Esophagus muscularis mucosa (tissue), 4 donors: ENCODE measurements at regions of chr12 and their contacts with region 1.

Region 1: DNA sequence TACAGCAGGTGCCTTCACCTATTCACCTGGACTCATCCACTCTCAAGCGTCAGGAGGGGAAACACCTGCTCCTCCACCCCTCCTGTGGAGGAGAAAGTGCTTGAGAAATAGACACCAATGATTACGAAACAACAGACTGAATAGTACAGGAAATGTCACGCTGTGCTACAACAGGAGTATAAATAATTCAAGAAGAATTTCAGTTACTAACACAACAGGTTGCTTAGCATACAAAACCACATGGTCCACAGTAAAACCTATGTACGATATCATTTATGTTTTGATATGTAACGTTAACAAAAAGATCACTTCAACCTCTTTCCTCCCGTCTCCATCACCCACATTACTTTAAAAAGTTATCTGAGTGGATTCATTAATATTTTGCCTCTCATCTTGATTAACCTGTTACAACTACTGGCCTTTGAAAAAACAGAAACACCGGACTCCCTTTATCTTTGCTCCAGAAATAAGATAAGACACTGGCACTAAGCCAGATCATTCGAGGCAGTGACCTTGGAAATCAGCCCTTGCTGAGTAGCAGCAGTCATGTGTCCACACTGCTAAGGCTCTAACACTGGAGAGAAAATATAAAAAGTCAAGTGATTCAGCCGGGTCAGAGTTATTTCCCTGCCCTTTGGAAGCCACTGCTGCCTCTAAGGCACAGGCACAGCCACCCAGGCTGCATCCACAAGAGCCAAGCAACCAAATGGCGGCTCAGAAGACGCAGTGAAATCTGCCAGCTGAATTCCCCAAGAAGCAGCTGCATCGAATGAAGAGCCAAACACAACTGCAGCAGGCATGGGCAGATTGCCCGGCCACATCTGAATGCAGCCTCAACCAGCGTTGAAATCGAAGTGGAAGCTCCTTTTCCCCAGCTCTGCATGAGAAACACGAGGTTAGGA is 40.9 kb downstream of the NT5DC3 start:
- DNase-seq: no peak
- H3K4me3 ChIP-seq: peak overlapping the region in 3 of 4 donors; percentile 7 to 29 (median 26)
- H3K27ac ChIP-seq: peak overlapping the region; percentile 70 to 84 (median 76)
- H3K4me1 ChIP-seq: peaks cover 18 to 84% (median 73%) of the 10 kb centered on the region in 4 donors
- H3K27me3 ChIP-seq: no peaks in the 10 kb centered on the region
- CTCF ChIP-seq: no peak
- EP300 ChIP-seq: no peak
- POLR2A ChIP-seq: no peak

Region 2: DNA sequence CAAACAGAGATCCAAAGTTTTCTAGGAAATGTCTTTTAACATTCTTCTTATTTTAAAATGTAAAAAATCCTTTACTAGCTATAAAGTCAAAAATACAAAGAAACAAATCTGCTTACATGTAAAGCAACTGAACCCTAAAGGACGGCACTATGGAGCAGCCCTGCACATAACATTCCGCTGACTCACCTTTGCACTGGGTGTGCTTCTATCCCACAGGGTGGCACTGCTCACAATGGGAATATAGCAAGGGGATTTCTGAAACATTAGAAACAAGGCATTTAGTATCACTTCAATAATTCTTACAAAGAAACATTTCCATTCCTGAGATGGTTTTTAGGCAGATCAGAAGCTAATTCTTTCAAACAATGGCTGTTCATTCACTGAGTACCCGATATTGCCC is 398.7 kb before region 1 on chr12:
- intact Hi-C with region 1: no loop called
- DNase-seq: no peak
- H3K4me3 ChIP-seq: no peak overlapping the region
- H3K27ac ChIP-seq: no peak overlapping the region
- H3K4me1 ChIP-seq: no peaks in the 10 kb centered on the region
- H3K27me3 ChIP-seq: no peaks in the 10 kb centered on the region
- CTCF ChIP-seq: no peak
- EP300 ChIP-seq: no peak
- POLR2A ChIP-seq: no peak

Region 3: DNA sequence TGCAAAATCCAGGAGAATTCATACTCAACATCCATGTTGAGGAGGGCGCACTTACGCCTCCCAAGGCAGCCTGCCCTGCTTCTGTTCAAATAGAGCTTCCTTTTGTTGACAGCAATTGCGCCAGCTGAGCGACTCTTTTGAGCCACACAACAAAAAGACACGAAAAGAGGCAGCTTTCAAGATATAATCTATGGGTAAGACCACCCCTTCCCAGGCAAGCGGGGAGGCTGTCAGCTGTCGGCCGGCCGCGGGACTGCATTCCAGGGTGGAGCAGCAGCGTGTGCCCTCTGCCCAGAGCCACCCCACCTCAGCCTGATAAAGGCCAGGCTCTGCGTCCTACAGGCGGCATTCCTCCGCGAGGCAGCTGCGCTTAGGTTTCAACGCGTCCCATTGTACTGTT is 228.8 kb before region 1 on chr12:
- intact Hi-C with region 1: no loop called
- DNase-seq: peak; percentile 55
- H3K4me3 ChIP-seq: no peak overlapping the region
- H3K27ac ChIP-seq: no peak overlapping the region
- H3K4me1 ChIP-seq: peaks cover 2 to 12% (median 8%) of the 10 kb centered on the region in 4 donors
- H3K27me3 ChIP-seq: peaks cover 0 to 23% (median 0%) of the 10 kb centered on the region in 4 donors
- CTCF ChIP-seq: no peak
- EP300 ChIP-seq: no peak
- POLR2A ChIP-seq: no peak

Region 4: GRCh38 chr12:103779428-103780092 is 20.6 kb before region 1 on chr12:
- intact Hi-C with region 1: loop called (anchors 2 kb)
- DNase-seq: no peak
- H3K4me3 ChIP-seq: no peak overlapping the region
- H3K27ac ChIP-seq: peak overlapping the region in 1 of 4 donors; percentile 12
- H3K4me1 ChIP-seq: peaks cover 0 to 21% (median 3%) of the 10 kb centered on the region in 4 donors
- H3K27me3 ChIP-seq: no peaks in the 10 kb centered on the region
- CTCF ChIP-seq: no peak
- EP300 ChIP-seq: no peak
- POLR2A ChIP-seq: no peak

Region 5: GRCh38 chr12:103839103-103839502 is 39.0 kb after region 1 on chr12:
- intact Hi-C with region 1: loop called (anchors 5 kb)
- DNase-seq: no peak
- H3K4me3 ChIP-seq: peak overlapping the region; percentile 84 to 100 (median 94)
- H3K27ac ChIP-seq: peak overlapping the region; percentile 90 to 97 (median 96)
- H3K4me1 ChIP-seq: peaks cover 16 to 72% (median 59%) of the 10 kb centered on the region in 4 donors
- H3K27me3 ChIP-seq: no peaks in the 10 kb centered on the region
- CTCF ChIP-seq: no peak
- EP300 ChIP-seq: no peak
- POLR2A ChIP-seq: no peak

Region 6: DNA sequence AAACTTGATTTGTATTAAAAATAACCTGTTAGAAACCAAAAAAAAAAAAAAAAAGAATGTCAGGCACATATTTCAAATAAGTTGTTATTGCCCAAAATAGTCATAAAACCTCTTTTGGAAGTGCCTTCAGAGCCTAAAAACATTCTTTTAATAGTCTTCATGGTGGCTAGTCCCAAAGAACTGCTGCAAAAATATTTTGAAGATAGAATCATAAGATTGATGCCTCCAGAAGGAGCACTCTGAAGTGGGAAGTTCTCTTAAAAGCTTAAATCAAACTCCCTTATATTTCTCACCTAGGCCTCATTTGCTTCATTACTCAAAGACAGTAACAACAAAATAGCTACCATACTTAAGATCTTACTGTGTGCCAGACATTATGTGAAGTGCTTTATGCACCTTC is 68.1 kb after region 1 on chr12:
- intact Hi-C with region 1: loop called (anchors 5 kb)
- DNase-seq: no peak
- H3K4me3 ChIP-seq: no peak overlapping the region
- H3K27ac ChIP-seq: peak overlapping the region; percentile 85 to 97 (median 86)
- H3K4me1 ChIP-seq: peaks cover 0 to 62% (median 43%) of the 10 kb centered on the region in 4 donors
- H3K27me3 ChIP-seq: no peaks in the 10 kb centered on the region
- CTCF ChIP-seq: no peak
- EP300 ChIP-seq: no peak
- POLR2A ChIP-seq: no peak